Mammary epithelial cell (primary cell): ENCODE measurements at regions of chr11 and their contacts with region 1.

Region 1: DNA sequence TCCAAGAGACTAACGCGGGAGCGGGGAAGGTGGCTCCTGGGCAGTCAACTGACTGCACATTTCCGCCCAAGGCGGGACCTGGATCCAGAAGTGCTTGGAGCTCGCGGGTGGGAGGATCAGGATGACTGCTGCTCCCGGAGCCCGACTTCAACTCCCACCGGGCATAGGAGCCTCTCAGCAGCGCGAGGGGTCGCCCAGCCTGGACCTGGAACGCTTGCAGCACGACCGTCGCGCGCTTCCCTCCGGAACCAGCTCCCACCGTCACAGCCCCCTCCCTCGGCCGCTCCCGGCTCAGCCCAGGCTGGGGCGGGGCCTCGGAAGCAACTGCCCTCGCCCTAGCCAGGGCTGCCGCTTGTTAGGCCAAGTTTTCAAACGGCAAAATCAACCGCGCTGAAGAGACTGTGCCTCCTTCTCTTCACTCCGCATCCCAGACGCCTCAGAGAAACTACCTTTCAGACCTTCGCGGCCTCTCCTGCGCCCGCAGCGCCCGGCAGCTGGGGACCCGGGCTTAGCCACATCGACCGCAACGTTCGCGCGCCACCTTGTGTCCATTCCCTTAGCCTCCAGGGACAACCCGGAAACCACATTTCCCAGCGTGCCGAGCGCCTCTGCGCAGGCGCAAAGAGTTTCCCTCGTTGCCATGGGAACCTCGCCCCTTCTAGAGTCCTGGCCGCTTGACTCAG is 14.0 kb downstream of the SSH3 start:
- DNase-seq: peak; percentile 94
- H3K4me3 ChIP-seq: peak overlapping the region; percentile 75 to 86 (median 79)
- H3K27ac ChIP-seq: peak overlapping the region; percentile 85
- H3K4me1 ChIP-seq: peaks cover 27% of the 10 kb centered on the region
- H3K27me3 ChIP-seq: no peaks in the 10 kb centered on the region
- CTCF ChIP-seq: peak; percentile 82 to 94

Region 2: GRCh38 chr11:66950113-66950535 is 367.2 kb before region 1 on chr11:
- CTCF ChIA-PET with region 1: no interaction called
- dilution Hi-C with region 1: loop called (anchors 5 kb)
- in situ Hi-C with region 1: no loop called
- intact Hi-C with region 1: no loop called
- DNase-seq: peak; percentile 81
- H3K4me3 ChIP-seq: no peak overlapping the region
- H3K27ac ChIP-seq: peak overlapping the region; percentile 25
- H3K4me1 ChIP-seq: peaks cover 11% of the 10 kb centered on the region
- H3K27me3 ChIP-seq: no peaks in the 10 kb centered on the region
- CTCF ChIP-seq: no peak

Region 3: GRCh38 chr11:67099831-67100324 is 217.5 kb before region 1 on chr11:
- CTCF ChIA-PET with region 1: no interaction called
- dilution Hi-C with region 1: no loop called
- in situ Hi-C with region 1: no loop called
- intact Hi-C with region 1: loop called (anchors 5 kb)
- DNase-seq: no peak
- H3K4me3 ChIP-seq: no peak overlapping the region
- H3K27ac ChIP-seq: no peak overlapping the region
- H3K4me1 ChIP-seq: peaks cover 8% of the 10 kb centered on the region
- H3K27me3 ChIP-seq: no peaks in the 10 kb centered on the region
- CTCF ChIP-seq: no peak

Region 4: DNA sequence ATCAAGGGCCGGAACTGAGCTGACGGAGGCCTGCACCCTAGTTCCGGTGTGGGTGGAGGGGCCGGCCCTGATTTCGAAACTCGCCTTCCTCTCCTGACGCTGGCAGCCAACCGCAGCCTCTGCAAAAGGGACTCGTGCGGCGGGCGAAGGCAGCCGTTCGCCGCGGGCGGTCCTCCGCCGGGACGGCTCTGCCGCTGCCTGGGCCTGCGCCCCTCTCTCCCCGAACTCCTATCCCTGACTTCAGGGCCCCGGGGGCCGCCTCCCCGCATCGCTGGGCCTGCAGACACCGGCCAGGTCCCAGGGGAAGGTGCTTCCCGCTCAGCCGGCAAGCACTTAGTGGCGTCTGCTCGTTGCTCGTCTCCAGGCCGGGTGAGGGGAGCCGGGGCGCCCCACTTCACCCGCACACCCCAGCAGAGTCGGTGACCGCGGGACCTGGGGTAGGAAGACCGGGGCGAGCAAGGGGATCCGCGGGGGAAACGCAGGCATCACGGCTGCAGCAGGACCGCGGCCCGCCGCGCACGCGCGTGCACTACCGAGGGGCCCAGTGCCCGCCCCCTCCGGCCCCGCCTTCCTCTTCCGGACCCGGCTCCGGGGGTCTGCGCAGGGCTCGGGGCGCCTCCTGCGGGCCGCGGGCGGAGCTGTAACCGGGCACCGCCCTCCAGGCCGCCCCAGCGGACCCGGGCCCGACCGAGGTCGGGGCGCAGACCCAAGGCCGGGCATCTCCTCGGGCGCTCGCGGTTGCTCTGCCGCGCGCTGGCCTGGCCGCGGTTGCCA is 28.7 kb before region 1 on chr11:
- CTCF ChIA-PET with region 1: no interaction called
- dilution Hi-C with region 1: no loop called
- in situ Hi-C with region 1: no loop called
- intact Hi-C with region 1: loop called (anchors 1 kb)
- DNase-seq: peak; percentile 85
- H3K4me3 ChIP-seq: peak overlapping the region; percentile 45 to 65 (median 64)
- H3K27ac ChIP-seq: peak overlapping the region; percentile 57
- H3K4me1 ChIP-seq: peaks cover 34% of the 10 kb centered on the region
- H3K27me3 ChIP-seq: no peaks in the 10 kb centered on the region
- CTCF ChIP-seq: no peak

Region 5: GRCh38 chr11:67382276-67383136 is 65.2 kb after region 1 on chr11:
- CTCF ChIA-PET with region 1: no interaction called
- dilution Hi-C with region 1: loop called (anchors 5 kb)
- in situ Hi-C with region 1: no loop called
- intact Hi-C with region 1: loop called (anchors 1 kb)
- DNase-seq: peak; percentile 58
- H3K4me3 ChIP-seq: no peak overlapping the region
- H3K27ac ChIP-seq: no peak overlapping the region
- H3K4me1 ChIP-seq: peaks cover 32% of the 10 kb centered on the region
- H3K27me3 ChIP-seq: no peaks in the 10 kb centered on the region
- CTCF ChIP-seq: peak; percentile 99 to 100

Region 6: DNA sequence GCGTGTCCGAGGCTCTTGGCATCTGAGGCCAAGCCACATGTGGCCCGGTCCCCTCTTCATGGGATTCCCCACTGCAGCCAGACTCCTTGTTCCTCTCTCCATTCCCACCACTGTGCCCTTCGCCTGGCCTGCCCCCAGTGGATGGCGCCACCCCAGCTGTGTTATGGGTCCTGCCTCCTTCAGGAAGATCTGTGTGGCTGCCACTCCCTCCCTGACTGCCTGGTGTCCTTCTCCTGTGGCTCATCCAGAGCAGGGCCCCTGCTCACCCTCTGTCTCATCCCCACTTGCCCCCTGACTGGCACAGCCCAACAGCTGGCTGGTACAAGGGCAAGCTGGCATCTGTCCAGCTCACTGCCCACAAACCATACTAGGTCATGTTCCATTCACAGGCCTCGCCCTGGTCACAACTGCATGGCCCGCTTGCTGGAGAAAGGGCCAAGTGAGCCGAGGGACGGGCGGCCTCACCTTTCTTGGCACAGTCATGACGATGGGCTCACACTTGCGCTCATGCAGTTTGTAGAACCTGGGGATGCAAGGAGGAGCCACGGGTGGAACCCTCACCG is 122.1 kb after region 1 on chr11:
- CTCF ChIA-PET with region 1: no interaction called
- dilution Hi-C with region 1: no loop called
- in situ Hi-C with region 1: no loop called
- intact Hi-C with region 1: no loop called
- DNase-seq: no peak
- H3K4me3 ChIP-seq: no peak overlapping the region
- H3K27ac ChIP-seq: no peak overlapping the region
- H3K4me1 ChIP-seq: peaks cover 9% of the 10 kb centered on the region
- H3K27me3 ChIP-seq: no peaks in the 10 kb centered on the region
- CTCF ChIP-seq: peak; percentile 27 to 49

Region 7: GRCh38 chr11:67464411-67465183 is 147.3 kb after region 1 on chr11:
- CTCF ChIA-PET with region 1: no interaction called
- dilution Hi-C with region 1: no loop called
- in situ Hi-C with region 1: no loop called
- intact Hi-C with region 1: no loop called
- DNase-seq: peak; percentile 73
- H3K4me3 ChIP-seq: peak overlapping the region; percentile 0 to 42 (median 28)
- H3K27ac ChIP-seq: peak overlapping the region; percentile 40
- H3K4me1 ChIP-seq: peaks cover 26% of the 10 kb centered on the region
- H3K27me3 ChIP-seq: no peaks in the 10 kb centered on the region
- CTCF ChIP-seq: no peak